Prostate gland (tissue), 2 donors: ENCODE measurements at regions of chr7 and their contacts with region 1.

Region 1: DNA sequence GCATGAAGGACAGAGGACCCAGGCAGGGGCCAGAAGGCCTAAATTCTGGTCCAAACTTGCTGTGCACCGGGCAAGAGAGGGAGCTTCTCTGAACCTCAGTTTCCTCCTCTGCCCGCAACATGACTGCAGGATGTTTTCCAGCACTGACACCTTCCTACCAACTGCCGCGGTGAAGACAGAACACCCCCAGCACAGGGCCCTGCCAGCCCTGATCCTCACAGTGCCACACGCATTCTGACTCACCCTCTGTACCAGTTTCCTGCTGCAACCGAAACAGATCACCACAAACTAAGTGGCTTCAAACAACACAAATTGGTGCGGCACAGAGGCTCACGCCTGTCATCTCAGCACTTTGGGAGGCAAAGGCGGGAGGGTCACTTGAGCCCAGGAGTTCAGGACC is 18.1 kb downstream of the MAD1L1 start:
- DNase-seq: no peak
- H3K4me3 ChIP-seq: no peak overlapping the region
- H3K27ac ChIP-seq: no peak overlapping the region
- H3K4me1 ChIP-seq: no peaks in the 10 kb centered on the region
- H3K27me3 ChIP-seq: no peaks in the 10 kb centered on the region
- CTCF ChIP-seq: no peak
- POLR2A ChIP-seq: no peak

Region 2: GRCh38 chr7:1664711-1665548 is 549.7 kb before region 1 on chr7:
- intact Hi-C with region 1: loop called (anchors 5 kb)
- DNase-seq: peak; percentile 39
- H3K4me3 ChIP-seq: peak overlapping the region; percentile 31
- H3K27ac ChIP-seq: no peak overlapping the region
- H3K4me1 ChIP-seq: peaks cover 17% of the 10 kb centered on the region
- H3K27me3 ChIP-seq: peaks cover 16% of the 10 kb centered on the region
- CTCF ChIP-seq: peak; percentile 47 to 73 (median 63)
- POLR2A ChIP-seq: no peak